AG04449 (cell line): ENCODE measurements at regions of chr3 and their contacts with region 1.

Region 1: GRCh38 chr3:150721285-150722130 is 17.8 kb upstream of the ERICH6 start:
- DNase-seq: no peak
- H3K4me3 ChIP-seq: no peak overlapping the region
- CTCF ChIP-seq: peak; percentile 63

Region 2: DNA sequence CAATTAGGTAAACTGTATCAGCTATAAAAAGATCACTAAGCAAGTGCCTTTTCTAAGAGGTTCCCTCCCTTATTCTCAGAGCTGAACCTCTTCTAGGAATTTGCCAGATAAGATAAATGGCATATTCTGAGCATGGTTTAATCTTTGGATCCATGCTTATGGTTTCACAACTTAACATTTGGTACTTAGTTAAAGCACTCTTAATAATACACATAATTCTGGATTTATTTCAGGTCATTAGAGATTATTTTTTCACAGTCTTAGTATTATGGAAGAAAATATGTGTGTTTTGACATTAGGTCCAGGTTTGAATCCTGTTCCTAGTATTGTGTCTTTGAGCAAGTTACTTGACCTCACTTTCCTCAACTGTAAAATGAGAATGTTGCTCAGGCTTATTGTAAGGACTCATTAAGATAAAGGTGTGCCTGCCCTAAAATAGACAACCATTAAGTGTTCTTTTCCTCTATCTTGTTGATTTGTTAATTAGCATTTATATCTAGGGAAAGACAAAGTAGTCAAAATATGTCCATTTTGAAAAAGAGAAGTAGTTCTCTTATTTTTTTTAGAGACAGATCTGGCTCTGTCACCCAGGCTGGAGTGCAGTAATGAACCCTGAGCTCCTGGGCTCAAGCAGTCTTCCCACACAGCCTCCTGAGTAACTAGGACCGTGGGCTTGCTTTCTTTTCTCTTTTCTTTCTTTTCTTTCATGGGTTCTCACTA is 270.0 kb before region 1 on chr3:
- CTCF ChIA-PET with region 1: no interaction called
- POLR2A ChIA-PET with region 1: no interaction called
- DNase-seq: no peak
- H3K4me3 ChIP-seq: no peak overlapping the region
- CTCF ChIP-seq: no peak

Region 3: DNA sequence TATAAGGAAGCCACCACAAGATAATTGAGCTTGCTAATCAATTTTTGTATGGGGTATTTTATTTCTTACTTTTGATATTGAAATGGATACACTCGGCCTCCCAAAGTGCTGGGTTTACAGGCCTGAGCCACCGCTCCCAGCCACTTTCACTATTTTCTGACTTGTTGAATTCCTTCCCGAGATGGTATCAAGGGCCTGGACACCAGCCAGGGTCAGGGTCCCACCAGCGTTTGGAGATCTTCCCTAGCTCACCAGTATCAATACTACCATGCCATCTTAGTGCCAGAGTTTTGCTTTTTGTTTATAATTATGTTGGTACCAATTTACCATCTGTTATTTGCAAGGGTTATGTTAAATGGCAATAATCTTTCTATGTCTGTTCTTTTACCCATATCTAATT is 123.9 kb before region 1 on chr3:
- CTCF ChIA-PET with region 1: no interaction called
- POLR2A ChIA-PET with region 1: no interaction called
- DNase-seq: no peak
- H3K4me3 ChIP-seq: no peak overlapping the region
- CTCF ChIP-seq: no peak

Region 4: GRCh38 chr3:150703299-150704134 is 18.0 kb before region 1 on chr3 and contains the start of gene ERICH6:
- CTCF ChIA-PET with region 1: interaction called, 23 read pairs
- POLR2A ChIA-PET with region 1: no interaction called
- DNase-seq: peak; percentile 28
- H3K4me3 ChIP-seq: peak within 1 kb of the TSS; percentile 75
- CTCF ChIP-seq: no peak

Region 5: DNA sequence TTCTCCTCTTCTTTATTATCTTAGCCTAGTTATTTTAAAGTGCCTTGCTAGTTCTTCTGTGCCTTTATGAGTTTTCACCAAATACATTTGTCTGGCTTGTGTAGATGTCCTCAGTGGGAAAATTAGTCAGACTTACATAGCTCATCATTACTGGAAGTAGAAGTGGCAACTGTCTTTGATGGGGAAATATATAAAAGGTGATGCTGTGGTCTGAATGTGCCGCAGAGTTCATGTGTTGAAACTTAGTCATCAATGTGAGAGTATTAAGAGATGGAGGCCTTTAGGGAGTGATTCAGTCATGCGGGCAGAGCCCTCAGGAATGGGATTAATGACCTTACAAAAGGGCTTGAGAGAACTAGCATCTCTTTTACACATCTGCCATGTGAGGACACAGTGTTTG is 11.4 kb before region 1 on chr3:
- CTCF ChIA-PET with region 1: interaction called, 23 read pairs
- POLR2A ChIA-PET with region 1: no interaction called
- DNase-seq: no peak
- H3K4me3 ChIP-seq: no peak overlapping the region
- CTCF ChIP-seq: no peak

Region 6: GRCh38 chr3:150737874-150738713 is 16.6 kb after region 1 on chr3:
- CTCF ChIA-PET with region 1: interaction called, 17 read pairs
- POLR2A ChIA-PET with region 1: interaction called, 3 read pairs
- DNase-seq: no peak
- H3K4me3 ChIP-seq: no peak overlapping the region
- CTCF ChIP-seq: no peak

Region 7: GRCh38 chr3:150763122-150763841 is 41.8 kb after region 1 on chr3 and contains the start of gene SIAH2:
- CTCF ChIA-PET with region 1: interaction called, 13 read pairs
- POLR2A ChIA-PET with region 1: no interaction called
- DNase-seq: peak; percentile 73
- H3K4me3 ChIP-seq: peak within 1 kb of the TSS; percentile 89
- CTCF ChIP-seq: no peak

Region 8: GRCh38 chr3:150861851-150862250 is 140.3 kb after region 1 on chr3:
- CTCF ChIA-PET with region 1: interaction called, 104 read pairs
- POLR2A ChIA-PET with region 1: no interaction called
- DNase-seq: no peak
- H3K4me3 ChIP-seq: no peak overlapping the region
- CTCF ChIP-seq: no peak